ENCODE measurements at regions of chr1 and their contacts with region 1.

Region 1: GRCh38 chr1:186985889-186986491 is 157.2 kb downstream of the PLA2G4A start:
- DNase-seq: no peak
- ATAC-seq: peak; percentile 64

Region 2: GRCh38 chr1:186482661-186483255 is 503.2 kb before region 1 on chr1:
- intact Hi-C with region 1: loop called (anchors 1 kb)
- DNase-seq: peak; percentile 35
- ATAC-seq: peak; percentile 63

Region 3: DNA sequence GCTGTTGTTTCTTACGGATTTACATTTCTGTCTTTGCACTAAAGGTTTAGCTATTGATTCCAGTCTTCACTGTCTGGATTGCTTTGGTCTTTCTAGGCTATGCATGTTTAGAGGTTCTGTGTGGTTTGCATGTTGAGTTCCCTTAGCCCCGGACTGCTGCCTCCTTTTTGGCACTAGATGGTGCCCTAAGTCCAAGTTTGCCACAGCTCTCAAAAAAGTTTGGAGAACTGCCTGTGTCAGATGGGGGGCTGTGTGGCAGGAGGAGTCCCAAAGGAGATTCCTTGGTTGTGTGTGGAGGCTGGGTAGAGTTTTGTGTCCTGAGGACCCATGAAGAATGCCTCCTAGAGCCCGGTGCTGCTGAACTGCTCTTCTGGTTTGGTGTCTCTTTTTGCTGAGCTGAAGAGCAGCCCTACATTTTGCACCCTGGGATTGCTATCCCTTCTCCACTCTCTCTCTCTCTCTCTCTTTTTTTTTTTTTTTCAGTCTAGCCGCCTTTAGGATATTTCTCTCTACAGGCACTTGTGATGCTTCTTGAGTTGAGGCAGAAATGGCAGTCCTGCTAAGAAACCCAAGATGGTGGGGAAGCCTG is 380.1 kb before region 1 on chr1:
- intact Hi-C with region 1: loop called (anchors 5 kb)
- DNase-seq: no peak
- ATAC-seq: peak; percentile 74

Measured in left ventricle myocardium superior (tissue), 1 donor.